Sigmoid colon (tissue), 7 donors: ENCODE measurements at regions of chr20 and their contacts with region 1.

Region 1: DNA sequence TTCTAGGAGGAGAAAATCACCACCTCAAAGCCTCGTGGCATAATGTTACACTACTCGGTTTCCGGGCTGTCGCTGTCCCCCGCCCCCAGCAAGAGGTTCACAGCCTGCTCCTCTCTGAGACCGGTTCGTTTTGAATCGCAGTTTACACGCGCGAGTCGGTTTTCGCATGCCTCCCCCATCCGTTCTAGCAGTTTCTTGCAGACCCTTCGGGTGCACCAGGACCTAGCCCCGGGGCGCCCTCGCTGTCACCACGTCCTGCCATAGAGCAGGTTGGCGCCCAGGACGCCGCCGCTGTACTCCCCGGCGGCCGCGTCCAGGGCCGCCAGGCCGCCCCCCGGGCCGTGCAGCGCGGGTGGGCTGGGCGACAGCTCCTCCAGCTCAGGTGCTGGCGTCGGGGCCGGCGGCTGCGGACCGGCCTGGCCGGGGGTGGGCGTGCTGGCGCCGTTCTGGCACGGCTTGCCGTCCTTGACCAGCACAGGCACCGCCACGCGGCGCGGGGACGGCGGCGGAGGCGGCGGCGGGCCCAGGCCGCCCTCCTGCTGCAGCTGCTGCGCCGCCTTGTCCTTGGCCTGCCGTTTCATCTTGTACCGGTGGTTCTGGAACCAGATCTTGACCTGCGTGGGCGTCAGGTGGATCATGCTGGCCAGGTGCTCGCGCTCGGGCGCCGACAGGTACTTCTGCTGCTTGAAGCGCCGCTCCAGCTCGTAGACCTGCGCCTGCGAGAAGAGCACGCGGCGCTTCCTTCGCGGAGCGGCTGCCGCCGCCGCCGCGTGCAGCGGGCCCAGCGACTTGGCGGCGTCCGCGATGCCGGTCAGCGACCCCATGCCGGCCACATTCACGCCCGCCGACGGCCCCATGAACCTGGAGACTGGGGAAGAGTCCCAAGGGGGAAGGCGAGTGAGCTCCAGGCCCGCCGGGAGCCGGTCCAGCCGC is 1.4 kb downstream of the NKX2-4 start:
- DNase-seq: no peak
- H3K4me3 ChIP-seq: peak overlapping the region in 3 of 4 donors; percentile 5 to 25 (median 13)
- H3K27ac ChIP-seq: no peak overlapping the region
- H3K4me1 ChIP-seq: peaks cover 0 to 26% (median 15%) of the 10 kb centered on the region in 4 donors
- H3K27me3 ChIP-seq: peaks cover 73 to 100% (median 96%) of the 10 kb centered on the region in 3 donors
- CTCF ChIP-seq: no peak
- EP300 ChIP-seq: no peak
- POLR2A ChIP-seq: no peak

Region 2: DNA sequence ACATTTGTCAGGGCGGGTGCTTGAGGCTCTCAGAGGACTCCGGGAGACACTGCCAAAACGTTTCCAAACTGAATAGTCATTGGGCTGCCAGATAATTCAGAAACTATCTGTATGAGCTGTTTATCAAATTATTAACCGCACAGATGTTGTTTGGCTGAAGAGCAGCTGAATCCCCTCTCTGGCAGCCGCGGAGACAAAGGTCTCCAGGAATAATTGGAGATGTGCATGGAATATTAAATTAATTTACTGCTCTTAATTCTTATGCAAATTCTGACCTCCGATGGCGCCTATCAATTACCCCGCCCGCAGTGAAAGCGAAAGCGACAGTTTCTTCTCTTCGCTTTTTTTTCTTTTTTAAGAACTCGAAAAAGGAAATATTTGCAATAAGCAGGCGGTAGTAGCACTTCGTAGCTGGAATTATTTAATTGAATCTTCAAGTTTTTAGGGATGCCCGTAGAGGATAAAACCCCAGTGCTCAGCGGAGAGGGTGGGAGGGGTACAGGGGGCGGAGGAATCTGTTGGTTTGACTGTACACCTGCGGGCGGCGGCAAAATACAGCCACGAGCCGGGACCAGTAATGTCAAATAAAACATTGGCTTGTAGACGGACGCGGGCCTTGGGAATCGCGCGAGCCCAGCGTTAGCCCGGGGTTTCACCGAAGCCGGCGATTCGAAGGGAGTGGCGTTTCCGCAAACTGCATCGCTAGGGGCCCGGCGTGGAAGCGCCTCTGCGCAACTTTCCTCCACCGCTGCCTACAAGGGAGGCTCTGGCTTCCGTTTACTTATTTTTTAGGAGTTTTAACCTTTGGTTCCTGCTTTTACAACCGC is 296.0 kb before region 1 on chr20:
- intact Hi-C with region 1: loop called (anchors 5 kb)
- DNase-seq: no peak
- H3K4me3 ChIP-seq: peak overlapping the region; percentile 1 to 44 (median 36)
- H3K27ac ChIP-seq: peak overlapping the region in 1 of 4 donors; percentile 1
- H3K4me1 ChIP-seq: peaks cover 0 to 43% (median 39%) of the 10 kb centered on the region in 4 donors
- H3K27me3 ChIP-seq: peaks cover 62 to 89% (median 81%) of the 10 kb centered on the region in 3 donors
- CTCF ChIP-seq: no peak
- EP300 ChIP-seq: no peak
- POLR2A ChIP-seq: no peak